ENCODE measurements at regions of chr17 and their contacts with region 1.

Region 1: DNA sequence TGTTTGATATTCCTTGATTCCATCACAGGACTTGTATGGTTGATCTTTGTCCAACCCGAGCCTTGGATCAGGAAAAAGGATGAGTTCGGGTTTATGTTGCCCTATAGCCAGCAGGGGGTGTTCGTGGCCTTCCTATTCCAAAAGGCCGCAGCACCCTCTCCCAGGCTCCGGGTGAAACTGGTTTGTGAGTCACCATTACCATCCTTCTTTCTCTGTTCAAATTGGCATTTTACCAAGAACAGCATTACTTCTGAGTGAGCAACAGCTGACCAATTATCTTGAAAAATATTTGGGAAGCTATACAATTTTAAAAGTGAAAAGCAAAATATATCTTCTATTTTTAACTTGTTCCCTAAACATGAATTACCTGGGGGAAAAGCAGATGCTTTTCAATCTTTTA is 24.3 kb upstream of the KRT20 start:
- DNase-seq: peak; percentile 86 to 94
- H3K4me3 ChIP-seq: no peak overlapping the region
- CTCF ChIP-seq: peak in 1 of 3 donors; percentile 84
- POLR2A ChIP-seq: no peak

Region 2: DNA sequence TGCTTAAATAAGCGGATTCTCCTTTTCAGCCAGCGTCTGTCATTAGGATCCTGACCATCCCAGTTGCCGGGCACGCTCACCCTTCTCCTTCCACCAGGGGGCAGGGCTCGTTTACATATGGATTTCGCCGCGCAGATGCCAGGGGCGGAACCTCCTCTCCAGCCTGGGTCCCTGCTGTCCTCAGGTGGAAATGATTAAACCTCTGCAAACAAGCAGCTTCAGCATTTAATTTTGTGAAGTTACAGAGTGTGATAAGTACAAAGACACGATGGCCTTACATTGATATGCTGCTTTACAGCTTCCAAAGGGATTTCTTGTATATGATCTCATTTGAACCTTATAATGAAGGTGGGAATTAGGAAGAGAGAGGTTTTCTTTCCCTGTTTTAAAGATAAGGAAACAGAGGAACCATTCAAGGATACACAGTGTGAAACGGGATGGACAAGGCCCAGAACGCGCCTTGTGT is 105.7 kb before region 1 on chr17:
- intact Hi-C with region 1: loop called (anchors 10 kb)
- DNase-seq: peak; percentile 74 to 95
- H3K4me3 ChIP-seq: no peak overlapping the region
- CTCF ChIP-seq: peak in 1 of 3 donors; percentile 81
- POLR2A ChIP-seq: no peak

Region 3: DNA sequence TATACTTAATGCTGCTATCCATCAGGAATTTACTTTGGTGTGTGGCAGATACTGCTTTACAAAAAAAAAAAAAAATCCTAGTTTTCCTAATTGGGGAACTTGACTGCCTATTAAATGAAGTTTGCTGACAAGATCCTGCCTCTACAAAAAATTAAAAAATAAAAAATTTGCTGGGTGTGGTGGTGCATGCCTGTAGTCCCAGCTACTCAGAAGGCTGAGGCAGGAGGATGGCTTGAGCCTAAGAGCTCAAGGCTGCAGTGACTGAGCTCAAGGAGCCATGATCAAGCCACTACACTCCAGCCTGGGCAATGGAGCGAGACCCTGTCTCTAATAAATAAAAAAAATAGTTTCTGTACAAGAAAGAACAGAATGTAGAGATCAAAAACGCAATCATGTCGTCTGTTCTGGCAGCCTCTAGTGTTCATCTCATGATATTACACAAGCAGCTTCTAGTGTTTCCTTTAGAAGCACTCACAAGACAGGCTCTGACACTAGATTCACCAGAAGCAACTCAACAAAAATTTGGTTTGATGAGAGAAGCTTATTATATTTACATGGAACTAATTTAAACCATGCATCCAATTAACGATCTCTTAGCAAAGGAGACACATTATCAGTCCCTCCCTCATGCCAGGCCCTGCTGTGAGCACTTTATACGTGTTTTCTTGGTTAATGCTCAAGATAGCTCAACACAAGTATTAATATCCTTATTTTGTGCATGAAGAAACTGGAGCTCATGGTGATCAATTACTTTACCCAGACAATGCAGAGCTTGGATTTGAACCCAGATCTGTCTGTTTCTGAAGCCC is 412.9 kb after region 1 on chr17:
- intact Hi-C with region 1: loop called (anchors 10 kb)
- DNase-seq: peak in 1 of 2 donors; percentile 20
- H3K4me3 ChIP-seq: no peak overlapping the region
- CTCF ChIP-seq: peak in 1 of 3 donors; percentile 60
- POLR2A ChIP-seq: no peak

Region 4: GRCh38 chr17:41548844-41549595 is 639.7 kb after region 1 on chr17:
- intact Hi-C with region 1: loop called (anchors 5 kb)
- DNase-seq: peak; percentile 71 to 96
- H3K4me3 ChIP-seq: no peak overlapping the region
- CTCF ChIP-seq: peak in 1 of 3 donors; percentile 67
- POLR2A ChIP-seq: no peak

Measured in lower leg skin (tissue), 4 donors.